Right cardiac atrium (tissue), 5 donors: ENCODE measurements at regions of chr18 and their contacts with region 1.

Region 1: DNA sequence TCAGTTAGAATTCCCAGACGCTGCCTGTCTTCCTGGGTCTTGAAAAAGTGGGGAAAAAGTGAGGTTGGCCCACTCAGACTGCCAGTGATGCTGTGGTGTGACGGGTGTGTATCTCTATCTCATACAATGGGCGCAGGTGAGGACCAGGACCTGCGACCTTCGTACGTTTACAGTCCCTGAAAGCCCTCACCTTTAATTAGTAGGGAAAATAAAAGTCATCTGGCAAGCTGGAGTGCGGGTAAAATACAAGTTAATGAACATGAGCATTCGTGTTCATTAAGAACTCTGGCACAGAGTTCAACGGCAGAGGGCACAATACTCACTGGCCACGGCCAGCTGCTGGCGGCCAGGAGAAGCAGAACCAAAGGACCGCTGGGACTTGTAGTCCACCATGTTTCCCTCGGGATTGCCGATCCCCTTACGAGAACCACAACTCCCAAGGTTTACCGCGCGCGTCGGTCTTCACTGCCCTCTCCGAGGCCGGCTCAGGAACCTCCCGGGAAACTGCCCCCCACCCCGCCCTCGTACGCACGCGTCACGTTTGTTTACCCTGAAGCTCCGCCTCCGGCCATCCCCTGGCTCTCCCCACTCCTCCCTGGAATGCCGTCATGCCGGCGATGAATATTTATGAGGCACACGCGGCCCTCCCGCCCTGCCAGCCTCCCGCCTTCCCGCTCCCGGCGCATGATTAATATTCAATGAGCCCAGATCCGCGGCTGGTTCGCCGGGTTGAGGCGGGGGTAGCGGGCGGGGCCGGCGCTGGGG is 488 bp upstream of the PHLPP1 start:
- DNase-seq: peak; percentile 100
- ATAC-seq: peak; percentile 99
- H3K4me3 ChIP-seq: peak overlapping the region; percentile 90
- H3K27ac ChIP-seq: peak overlapping the region; percentile 82
- H3K4me1 ChIP-seq: no peaks in the 10 kb centered on the region
- H3K27me3 ChIP-seq: no peaks in the 10 kb centered on the region

Region 2: DNA sequence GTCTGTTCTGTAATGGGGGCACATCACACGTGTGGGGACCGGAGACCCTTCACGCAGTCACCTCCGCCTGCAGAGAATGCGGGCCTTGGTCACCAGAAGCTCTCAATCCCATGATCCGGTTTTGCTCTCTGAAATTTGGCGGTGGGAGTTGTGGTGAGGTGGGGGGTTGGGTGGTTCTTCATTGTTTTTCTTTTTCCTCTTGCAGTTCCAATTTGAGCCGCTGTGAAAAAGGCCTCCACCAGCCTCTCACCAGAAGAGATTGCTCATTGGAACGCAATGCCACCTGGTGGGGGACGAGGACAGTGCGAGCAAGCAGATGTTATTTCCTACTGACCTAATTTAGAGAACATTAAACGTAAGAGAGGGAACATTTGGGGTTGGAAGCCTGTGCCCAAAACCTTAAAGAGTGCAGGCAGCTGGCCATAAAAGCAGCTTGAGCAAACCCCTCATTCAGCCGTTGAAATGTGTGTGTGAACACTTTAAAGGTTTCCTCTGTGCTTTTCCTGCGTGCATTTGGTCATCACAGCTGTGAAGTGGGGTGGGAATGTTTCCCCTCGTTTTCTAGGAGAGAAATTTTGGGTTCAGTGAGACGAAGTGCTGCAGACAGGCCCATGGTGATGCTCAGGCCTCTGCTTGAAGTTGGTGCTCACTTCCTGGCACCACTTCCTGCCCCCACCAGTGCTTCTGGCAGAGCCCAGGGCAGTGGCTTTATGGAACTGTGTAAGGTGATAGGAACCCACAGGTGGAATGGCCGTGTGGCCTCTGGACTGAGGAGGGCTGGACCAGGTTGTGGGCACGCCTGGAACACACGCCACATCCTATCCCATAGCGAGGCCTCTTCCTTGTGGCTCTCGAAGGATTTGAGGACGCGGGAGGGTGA is 130.4 kb before region 1 on chr18:
- intact Hi-C with region 1: loop called in 1 of 4 experiments (anchors 10 kb)
- DNase-seq: peak; percentile 80 to 94 (median 91)
- ATAC-seq: peak; percentile 85 to 87
- H3K4me3 ChIP-seq: no peak overlapping the region
- H3K27ac ChIP-seq: no peak overlapping the region
- H3K4me1 ChIP-seq: no peaks in the 10 kb centered on the region
- H3K27me3 ChIP-seq: no peaks in the 10 kb centered on the region

Region 3: GRCh38 chr18:62802523-62802922 is 87.7 kb after region 1 on chr18:
- intact Hi-C with region 1: loop called in 1 of 4 experiments (anchors 5 kb)
- DNase-seq: no peak
- ATAC-seq: no peak
- H3K4me3 ChIP-seq: no peak overlapping the region
- H3K27ac ChIP-seq: no peak overlapping the region
- H3K4me1 ChIP-seq: peaks cover 4% of the 10 kb centered on the region
- H3K27me3 ChIP-seq: no peaks in the 10 kb centered on the region

Region 4: GRCh38 chr18:62957885-62958472 is 243.1 kb after region 1 on chr18:
- intact Hi-C with region 1: loop called in 1 of 4 experiments (anchors 10 kb)
- DNase-seq: peak in 1 of 3 donors; percentile 47
- ATAC-seq: peak; percentile 43 to 55
- H3K4me3 ChIP-seq: no peak overlapping the region
- H3K27ac ChIP-seq: no peak overlapping the region
- H3K4me1 ChIP-seq: peaks cover 2% of the 10 kb centered on the region
- H3K27me3 ChIP-seq: no peaks in the 10 kb centered on the region

Region 5: DNA sequence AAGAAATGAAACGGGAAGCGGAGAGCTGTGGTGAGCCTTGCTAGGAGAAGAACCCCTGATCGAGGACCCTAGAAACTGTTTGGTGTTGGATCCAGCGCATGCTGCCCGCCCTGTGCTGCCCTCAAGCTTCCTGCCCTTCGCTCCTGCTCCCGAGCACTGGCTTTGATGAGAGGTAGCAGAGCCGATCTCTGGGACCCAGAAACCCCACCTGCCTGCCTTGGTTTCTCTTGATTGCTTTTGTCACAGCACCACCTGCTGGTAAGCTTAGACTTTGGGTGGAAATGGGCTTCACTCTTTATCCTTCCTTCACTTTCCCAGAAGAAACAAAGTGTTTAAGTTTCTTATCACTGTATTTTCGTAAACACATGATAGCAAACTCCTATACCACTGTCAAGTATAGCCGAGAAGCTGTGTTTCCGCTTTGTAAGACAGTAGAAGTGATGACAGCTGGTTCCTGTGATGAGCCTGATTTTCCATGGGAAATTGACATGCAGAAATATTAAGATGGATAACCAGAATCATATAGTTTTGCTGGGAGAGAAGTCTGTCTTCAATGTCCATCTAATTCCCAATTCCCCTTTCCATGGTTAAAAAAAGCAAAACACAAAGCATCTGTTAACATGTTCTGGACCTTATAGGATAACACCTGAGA is 267.9 kb after region 1 on chr18:
- intact Hi-C with region 1: loop called (anchors 2 to 10 kb)
- DNase-seq: peak; percentile 41 to 69 (median 66)
- ATAC-seq: peak; percentile 67 to 69
- H3K4me3 ChIP-seq: peak overlapping the region; percentile 36
- H3K27ac ChIP-seq: no peak overlapping the region
- H3K4me1 ChIP-seq: no peaks in the 10 kb centered on the region
- H3K27me3 ChIP-seq: no peaks in the 10 kb centered on the region